ENCODE measurements at regions of chr22 and their contacts with region 1.

Region 1: GRCh38 chr22:35627264-35628041 is 10.3 kb upstream of the MB start:
- DNase-seq: peak; percentile 79 to 85
- ATAC-seq: peak; percentile 69 to 84 (median 78)
- H3K4me3 ChIP-seq: peak overlapping the region in 9 of 10 donors; percentile 28 to 71 (median 61)
- H3K27ac ChIP-seq: peak overlapping the region; percentile 11 to 93 (median 84)
- H3K4me1 ChIP-seq: peaks cover 3 to 37% (median 20%) of the 10 kb centered on the region in 9 donors
- H3K27me3 ChIP-seq: no peaks in the 10 kb centered on the region
- CTCF ChIP-seq: peak; percentile 17 to 75 (median 53)

Region 2: GRCh38 chr22:35350539-35351503 is 276.6 kb before region 1 on chr22:
- intact Hi-C with region 1: loop called in 5 of 10 experiments (anchors 1 to 5 kb)
- DNase-seq: peak; percentile 92 to 93
- ATAC-seq: peak; percentile 85 to 92 (median 90)
- H3K4me3 ChIP-seq: peak overlapping the region in 9 of 10 donors; percentile 39 to 65 (median 61)
- H3K27ac ChIP-seq: peak overlapping the region in 8 of 10 donors; percentile 53 to 90 (median 73)
- H3K4me1 ChIP-seq: peaks cover 0 to 48% (median 13%) of the 10 kb centered on the region in 9 donors
- H3K27me3 ChIP-seq: no peaks in the 10 kb centered on the region
- CTCF ChIP-seq: peak; percentile 75 to 97 (median 94)

Region 3: GRCh38 chr22:35430897-35431322 is 196.5 kb before region 1 on chr22:
- intact Hi-C with region 1: loop called in 5 of 10 experiments (anchors 1 to 5 kb)
- DNase-seq: peak; percentile 90 to 91
- ATAC-seq: peak; percentile 94 to 99 (median 98)
- H3K4me3 ChIP-seq: no peak overlapping the region
- H3K27ac ChIP-seq: peak overlapping the region in 5 of 10 donors; percentile 14 to 69 (median 48)
- H3K4me1 ChIP-seq: peaks cover 0 to 14% (median 8%) of the 10 kb centered on the region in 9 donors
- H3K27me3 ChIP-seq: no peaks in the 10 kb centered on the region
- CTCF ChIP-seq: peak; percentile 94 to 99 (median 97)

Region 4: DNA sequence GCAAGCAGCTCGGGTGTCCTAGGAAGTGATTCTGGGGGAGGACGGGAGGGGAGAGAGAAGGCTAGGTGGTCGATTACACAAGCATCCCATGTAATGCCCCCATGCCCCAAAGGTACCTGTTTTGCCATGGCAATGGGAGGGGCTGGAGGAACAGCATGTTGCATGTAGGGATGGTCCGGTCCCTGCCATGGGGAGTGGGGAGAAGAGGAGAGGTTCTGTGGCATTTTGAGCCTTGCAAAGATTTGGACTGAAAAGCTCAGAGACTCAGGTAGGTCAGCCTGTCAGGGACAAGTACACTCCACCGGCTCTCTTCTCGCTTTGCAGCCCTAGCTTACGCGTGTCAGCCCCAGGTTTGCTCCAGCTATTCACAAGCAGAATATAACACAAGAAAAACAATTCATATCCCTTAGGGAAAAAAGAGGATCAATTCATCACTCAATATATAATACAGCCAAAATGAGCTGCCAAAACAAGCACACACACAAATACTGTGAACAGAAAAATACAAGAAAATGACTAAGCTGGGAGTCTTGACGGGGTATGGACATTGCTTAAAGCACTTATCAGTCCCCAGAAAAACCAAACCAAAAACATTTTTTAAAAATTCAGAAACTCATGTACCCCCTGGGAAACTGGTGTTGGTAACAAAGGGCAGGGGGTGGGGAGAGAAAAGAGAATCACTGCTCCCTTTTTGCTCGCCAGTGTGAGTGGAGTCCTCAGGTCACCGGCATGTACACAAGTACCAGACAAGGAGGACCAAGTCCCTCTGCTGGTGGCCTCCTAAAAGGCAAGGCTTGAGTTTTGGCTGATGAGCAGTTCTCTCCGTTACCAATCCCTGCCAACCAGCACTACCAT is 111.8 kb after region 1 on chr22:
- intact Hi-C with region 1: loop called in 6 of 10 experiments (anchors 5 to 10 kb)
- DNase-seq: no peak
- ATAC-seq: peak in 2 of 8 donors; percentile 31 to 40
- H3K4me3 ChIP-seq: no peak overlapping the region
- H3K27ac ChIP-seq: peak overlapping the region in 1 of 10 donors; percentile 9
- H3K4me1 ChIP-seq: peaks cover 0 to 53% (median 31%) of the 10 kb centered on the region in 9 donors
- H3K27me3 ChIP-seq: no peaks in the 10 kb centered on the region
- CTCF ChIP-seq: peak in 7 of 9 donors; percentile 19 to 53 (median 26)

Region 5: DNA sequence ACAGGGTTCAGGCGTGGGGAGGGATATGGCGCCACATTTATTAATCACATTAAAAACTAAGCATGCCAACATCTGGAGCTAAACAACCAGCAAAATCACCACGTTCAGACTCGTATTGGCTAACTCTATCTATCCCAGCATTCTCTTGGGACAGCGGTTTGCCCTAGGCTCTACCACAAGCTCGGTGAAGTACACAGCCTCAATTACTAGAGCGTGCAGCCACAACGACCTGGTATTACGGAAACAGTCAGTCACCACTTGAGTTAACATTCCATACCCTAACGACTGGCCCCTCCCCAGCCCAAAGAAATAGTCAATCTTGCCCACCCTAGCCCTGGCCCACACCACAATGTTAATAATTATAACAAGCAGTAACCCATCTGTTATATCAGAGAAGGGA is 122.4 kb after region 1 on chr22:
- intact Hi-C with region 1: loop called in 3 of 10 experiments (anchors 5 to 10 kb)
- DNase-seq: no peak
- ATAC-seq: no peak
- H3K4me3 ChIP-seq: no peak overlapping the region
- H3K27ac ChIP-seq: no peak overlapping the region
- H3K4me1 ChIP-seq: peaks cover 0 to 60% (median 42%) of the 10 kb centered on the region in 9 donors
- H3K27me3 ChIP-seq: no peaks in the 10 kb centered on the region
- CTCF ChIP-seq: no peak

Region 6: GRCh38 chr22:36065775-36066559 is 438.5 kb after region 1 on chr22:
- intact Hi-C with region 1: loop called in 3 of 10 experiments (anchors 2 to 5 kb)
- DNase-seq: peak; percentile 87 to 92
- ATAC-seq: peak; percentile 88 to 96 (median 95)
- H3K4me3 ChIP-seq: peak overlapping the region; percentile 30 to 73 (median 57)
- H3K27ac ChIP-seq: peak overlapping the region; percentile 66 to 93 (median 86)
- H3K4me1 ChIP-seq: peaks cover 0 to 19% (median 7%) of the 10 kb centered on the region in 9 donors
- H3K27me3 ChIP-seq: no peaks in the 10 kb centered on the region
- CTCF ChIP-seq: peak; percentile 99 to 100 (median 100)